Gastrocnemius medialis (tissue), 4 donors: ENCODE measurements at regions of chr12 and their contacts with region 1.

Region 1: DNA sequence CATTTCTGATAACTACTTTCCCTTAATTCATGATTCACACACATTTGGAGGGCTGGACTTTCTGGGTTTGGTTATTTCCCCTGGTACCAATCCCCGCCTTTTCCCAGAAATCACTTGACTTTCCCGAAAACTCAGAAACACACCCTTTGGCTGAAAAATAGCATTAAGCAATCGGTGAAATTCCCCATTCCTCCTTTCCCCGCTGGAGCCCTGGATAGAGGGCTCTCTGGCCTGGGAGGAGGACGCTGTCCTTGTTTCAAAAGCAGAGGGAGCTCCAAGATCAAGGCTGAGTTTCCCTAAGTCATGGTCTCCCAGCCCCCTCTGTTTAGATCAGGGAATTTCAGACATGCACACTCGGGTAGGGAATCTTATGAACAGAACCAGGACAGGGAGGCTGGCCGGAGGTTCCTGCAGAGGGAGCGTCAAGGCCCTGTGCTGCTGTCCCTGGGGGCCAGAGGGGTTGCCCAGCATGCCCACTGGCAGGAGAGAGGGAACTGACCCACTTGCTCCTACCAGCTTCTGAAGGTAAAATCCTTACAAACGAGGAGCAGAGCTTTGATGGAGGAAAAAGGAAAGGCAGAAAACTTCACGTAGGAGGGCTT is at the start of gene C1S:
- DNase-seq: peak; percentile 79 to 87
- ATAC-seq: peak; percentile 99
- H3K4me3 ChIP-seq: peak within 1 kb of the TSS; percentile 40 to 53 (median 44)
- H3K27ac ChIP-seq: peak within 1 kb of the TSS; percentile 78 to 80 (median 79)
- H3K4me1 ChIP-seq: peaks cover 14 to 25% of the 10 kb centered on the region in 2 donors
- H3K27me3 ChIP-seq: no peaks in the 10 kb centered on the region
- CTCF ChIP-seq: peak; percentile 86 to 97 (median 91)
- POLR2A ChIP-seq: peak; percentile 35 to 41
- total RNA-seq, gene C1S: 58.1 to 90.8 (median 85.9) TPM

Region 2: GRCh38 chr12:7092229-7092985 is 32.0 kb after region 1 on chr12 and contains the start of gene C1R:
- in situ Hi-C with region 1: loop called in 1 of 4 experiments (anchors 5 kb)
- intact Hi-C with region 1: loop called (anchors 1 kb)
- DNase-seq: peak; percentile 50 to 70
- ATAC-seq: peak; percentile 67 to 75
- H3K4me3 ChIP-seq: peak within 1 kb of the TSS; percentile 48 to 78 (median 59)
- H3K27ac ChIP-seq: peak within 1 kb of the TSS; percentile 68 to 80 (median 70)
- H3K4me1 ChIP-seq: peaks cover 8 to 24% of the 10 kb centered on the region in 2 donors
- H3K27me3 ChIP-seq: no peaks in the 10 kb centered on the region
- CTCF ChIP-seq: peak; percentile 75 to 93 (median 88)
- POLR2A ChIP-seq: peak in 1 of 2 donors; percentile 48
- total RNA-seq, gene C1R: 47.5 to 97.8 (median 74.9) TPM